HEK293 (cell line): ENCODE measurements at regions of chr7 and their contacts with region 1.

Region 1: DNA sequence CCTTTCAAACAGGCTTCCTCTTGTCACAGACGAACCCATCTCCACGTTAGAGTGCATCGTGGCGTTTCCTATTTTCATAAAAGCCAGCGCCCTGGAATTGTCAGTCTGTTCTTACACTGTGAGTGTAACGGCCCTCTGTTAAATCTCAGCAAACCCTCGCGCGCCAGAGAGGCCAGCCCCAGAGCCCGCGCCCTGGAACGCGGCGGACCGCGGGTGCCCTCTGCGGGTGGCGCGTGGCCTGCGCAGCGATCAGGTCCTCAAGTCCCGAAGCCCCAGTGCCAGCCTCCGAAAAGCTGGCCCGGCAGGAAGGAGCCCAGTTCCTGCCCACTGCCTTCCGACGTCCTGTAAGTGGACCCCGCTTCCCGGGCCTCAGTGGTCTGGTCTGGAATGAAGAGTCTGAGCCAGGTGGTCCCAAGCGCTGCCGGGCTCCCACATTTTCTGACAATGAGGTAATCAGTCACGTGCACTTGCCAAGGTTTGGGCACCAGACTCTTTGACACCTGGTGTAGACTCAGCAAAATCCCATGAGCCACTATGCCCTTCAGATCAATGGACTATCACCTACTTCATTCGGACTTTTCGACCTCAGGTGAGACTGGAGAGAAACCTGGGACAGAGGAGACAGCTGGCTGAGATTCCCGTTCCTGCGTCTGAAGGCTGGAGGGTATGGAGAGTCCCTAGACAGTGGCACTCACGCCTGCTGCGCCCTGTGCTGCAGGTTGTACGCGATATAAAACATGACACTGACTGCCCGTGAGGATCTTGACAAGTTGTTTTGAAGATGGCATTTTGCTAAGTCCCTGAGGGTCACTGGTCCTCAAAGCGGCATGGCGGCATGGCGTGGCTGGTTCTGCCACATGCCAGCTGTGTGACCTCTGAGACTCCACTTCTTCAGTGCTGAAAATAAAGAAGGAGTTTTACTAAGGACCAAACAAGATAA is 109.4 kb upstream of the LANCL2 start:
- H3K4me3 ChIP-seq: peak overlapping the region; percentile 39
- H3K27ac ChIP-seq: peak overlapping the region; percentile 66; the same call in 1 of the 2 replicates
- H3K4me1 ChIP-seq: peaks cover 6% of the 10 kb centered on the region; the same call in 1 of the 2 replicates
- CTCF ChIP-seq: peak; percentile 79

Region 2: GRCh38 chr7:54773472-54774399 is 482.0 kb before region 1 on chr7:
- CTCF ChIA-PET with region 1: interaction called, 141 read pairs
- POLR2A ChIA-PET with region 1: interaction called, 4 read pairs
- H3K4me3 ChIP-seq: peak overlapping the region; percentile 6; the same call in 1 of the 2 replicates
- H3K27ac ChIP-seq: no peak overlapping the region
- H3K4me1 ChIP-seq: no peaks in the 10 kb centered on the region
- CTCF ChIP-seq: peak; percentile 42; the same call in 1 of the 2 replicates

Region 3: DNA sequence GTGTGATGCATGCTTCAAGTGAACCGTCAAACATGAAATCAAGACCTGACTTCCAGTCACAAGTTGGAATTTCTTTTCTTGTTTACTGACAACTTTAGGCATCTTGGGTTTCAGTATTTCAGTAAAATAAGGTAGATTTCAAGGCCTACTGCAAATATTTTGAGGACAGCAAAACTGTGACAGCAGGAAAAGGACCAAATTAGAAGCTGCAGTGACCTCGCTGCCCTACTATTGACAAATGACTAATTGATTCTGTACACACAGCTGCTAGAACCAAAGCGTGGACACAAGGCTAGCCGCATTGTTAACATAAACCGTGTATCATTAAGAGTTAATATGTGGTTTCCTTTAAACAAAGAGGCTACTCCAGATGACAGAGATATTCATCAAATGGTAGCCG is 391.1 kb before region 1 on chr7:
- CTCF ChIA-PET with region 1: interaction called, 13 read pairs
- POLR2A ChIA-PET with region 1: no interaction called
- H3K4me3 ChIP-seq: no peak overlapping the region
- H3K27ac ChIP-seq: no peak overlapping the region
- H3K4me1 ChIP-seq: no peaks in the 10 kb centered on the region
- CTCF ChIP-seq: no peak

Region 4: GRCh38 chr7:54995631-54996340 is 260.0 kb before region 1 on chr7:
- CTCF ChIA-PET with region 1: interaction called, 14 read pairs
- POLR2A ChIA-PET with region 1: no interaction called
- H3K4me3 ChIP-seq: no peak overlapping the region
- H3K27ac ChIP-seq: no peak overlapping the region
- H3K4me1 ChIP-seq: no peaks in the 10 kb centered on the region
- CTCF ChIP-seq: no peak

Region 5: GRCh38 chr7:55065079-55065478 is 190.7 kb before region 1 on chr7:
- CTCF ChIA-PET with region 1: interaction called, 15 read pairs
- POLR2A ChIA-PET with region 1: interaction called, 5 read pairs
- H3K4me3 ChIP-seq: no peak overlapping the region
- H3K27ac ChIP-seq: no peak overlapping the region
- H3K4me1 ChIP-seq: peaks cover 10% of the 10 kb centered on the region; the same call in 1 of the 2 replicates
- CTCF ChIP-seq: no peak

Region 6: GRCh38 chr7:55242613-55243012 is 13.2 kb before region 1 on chr7:
- CTCF ChIA-PET with region 1: interaction called, 13 read pairs
- POLR2A ChIA-PET with region 1: no interaction called
- H3K4me3 ChIP-seq: no peak overlapping the region
- H3K27ac ChIP-seq: no peak overlapping the region
- H3K4me1 ChIP-seq: no peaks in the 10 kb centered on the region
- CTCF ChIP-seq: no peak